GM12878 (cell line): ENCODE measurements at regions of chr6 and their contacts with region 1.

Region 1: DNA sequence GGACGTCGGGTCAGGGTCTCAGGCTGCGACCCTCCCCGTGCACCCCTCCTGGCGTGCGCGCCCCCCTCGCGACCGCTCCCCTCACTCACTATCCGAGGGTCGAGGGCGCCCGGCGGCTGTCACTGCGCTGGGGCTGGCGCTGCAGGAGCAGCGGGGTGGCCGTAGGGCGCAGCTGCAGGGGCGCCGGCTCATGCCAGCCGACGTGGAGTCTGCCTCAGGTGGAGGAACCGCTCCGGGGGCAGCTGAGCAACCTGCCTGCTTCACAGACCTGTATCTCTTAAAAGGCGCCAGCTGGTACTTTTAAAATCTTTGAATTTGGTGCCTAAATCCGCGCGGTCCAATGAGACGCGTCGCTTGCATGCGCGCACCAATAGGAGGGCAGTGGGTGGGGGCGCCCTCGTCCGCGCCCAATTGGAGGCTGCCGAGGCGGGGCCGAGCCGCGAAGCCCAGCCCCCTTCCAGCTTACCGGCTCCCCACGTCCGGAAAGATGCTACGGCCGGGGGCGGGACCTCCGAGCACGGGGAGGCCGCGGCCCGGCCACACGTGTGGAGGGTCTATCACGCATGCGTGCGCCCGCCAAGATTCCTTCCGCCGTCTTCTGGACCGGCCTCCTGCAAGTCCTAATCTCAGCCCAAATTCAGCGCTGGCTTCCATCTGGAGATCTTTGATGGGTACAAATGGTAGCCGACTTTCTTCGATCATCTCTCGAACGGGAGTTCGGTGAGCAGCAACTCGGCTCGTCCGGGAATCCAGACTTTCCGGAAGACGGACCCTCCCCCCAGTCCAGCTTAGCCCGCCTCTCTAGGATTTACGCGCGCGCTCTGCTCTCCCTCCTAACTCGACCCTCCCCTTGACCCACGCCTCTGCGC is at the start of gene FBXO5:
- DNase-seq: peak; percentile 85
- ATAC-seq: peak; percentile 87
- H3K4me3 ChIP-seq: peak within 1 kb of the TSS; percentile 92
- H3K27ac ChIP-seq: peak within 1 kb of the TSS; percentile 90
- H3K4me1 ChIP-seq: peaks cover 5% of the 10 kb centered on the region
- H3K27me3 ChIP-seq: no peaks in the 10 kb centered on the region
- CTCF ChIP-seq: no peak
- EP300 ChIP-seq: no peak
- POLR2A ChIP-seq: peak; percentile 79
- RAD21 ChIP-seq: no peak
- polyA plus RNA-seq, gene FBXO5: 13.6 to 19.3 TPM

Region 2: DNA sequence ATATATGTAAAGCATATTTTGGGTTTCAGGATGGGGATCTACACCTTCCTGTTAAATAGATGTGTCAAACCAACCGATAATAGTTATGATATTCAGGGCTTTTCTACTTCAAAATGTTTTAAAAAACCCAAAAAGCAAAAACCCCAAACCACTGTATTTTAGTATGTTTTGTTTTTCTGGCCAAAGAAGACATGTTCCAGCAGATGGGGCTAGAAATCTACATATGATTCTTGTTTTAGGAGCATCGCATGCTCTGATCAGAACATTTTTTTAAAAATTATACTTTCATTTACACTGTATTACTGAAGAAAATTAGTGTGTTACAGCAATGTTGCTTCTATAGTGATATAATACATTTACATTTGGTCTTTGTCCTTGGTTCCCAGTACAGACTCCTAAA is 1542.1 kb before region 1 on chr6:
- CTCF ChIA-PET with region 1: no interaction called
- POLR2A ChIA-PET with region 1: no interaction called
- RAD21 ChIA-PET with region 1: no interaction called
- SMC1A ChIA-PET with region 1: no interaction called
- in situ Hi-C with region 1: loop called (anchors 25 kb)
- intact Hi-C with region 1: no loop called
- DNase-seq: no peak
- ATAC-seq: peak; percentile 65
- H3K4me3 ChIP-seq: peak overlapping the region; percentile 32; the same call in 1 of the 2 replicates
- H3K27ac ChIP-seq: peak overlapping the region; percentile 61
- H3K4me1 ChIP-seq: peaks cover 13% of the 10 kb centered on the region
- H3K27me3 ChIP-seq: no peaks in the 10 kb centered on the region
- CTCF ChIP-seq: peak; percentile 24 to 50 (median 49); a peak in 5 of 6 replicates
- EP300 ChIP-seq: no peak
- POLR2A ChIP-seq: no peak
- RAD21 ChIP-seq: peak; percentile 67

Region 3: DNA sequence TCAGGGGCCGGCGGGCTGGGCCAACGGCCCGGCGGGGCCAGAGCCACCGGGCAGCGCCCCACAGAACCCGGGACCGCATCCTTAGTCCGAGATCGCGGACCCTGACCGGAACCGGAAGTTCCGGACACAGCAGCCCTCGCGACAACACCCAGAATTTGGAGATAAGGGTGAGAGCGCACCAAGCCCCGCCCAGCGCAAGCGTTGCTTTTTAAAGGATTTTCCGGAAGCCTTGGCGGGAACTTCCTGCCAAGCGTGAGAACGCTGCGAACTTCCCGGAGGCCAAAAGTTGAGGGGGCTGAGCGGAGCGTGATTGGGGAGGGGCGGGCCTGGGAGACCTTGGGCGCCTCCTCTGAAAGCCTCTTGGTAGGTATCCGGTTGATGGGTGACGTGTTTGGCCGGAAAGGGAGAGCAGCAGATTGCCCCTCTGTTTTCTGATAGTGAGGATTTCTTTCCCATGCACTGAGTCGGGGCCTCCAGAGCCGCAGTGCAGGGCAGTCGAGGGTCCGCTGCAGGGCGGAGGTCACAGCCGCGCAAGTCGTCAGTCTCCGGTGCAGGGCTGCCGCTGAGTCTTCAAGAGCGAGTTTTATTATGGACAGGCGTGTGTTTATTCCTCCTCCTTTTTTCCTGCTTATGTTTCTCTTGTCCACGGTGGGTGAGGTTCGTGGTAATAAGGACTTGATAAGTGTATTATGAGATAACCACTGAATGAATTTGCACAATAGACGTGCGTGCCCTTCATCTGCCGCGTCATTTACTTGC is 19.8 kb after region 1 on chr6 and contains the start of gene MTRF1L:
- CTCF ChIA-PET with region 1: interaction called, 9 read pairs
- POLR2A ChIA-PET with region 1: interaction called, 101 read pairs
- RAD21 ChIA-PET with region 1: interaction called, 22 read pairs
- SMC1A ChIA-PET with region 1: interaction called, 27 read pairs
- in situ Hi-C with region 1: no loop called
- intact Hi-C with region 1: loop called (anchors 2 kb)
- DNase-seq: peak; percentile 82
- ATAC-seq: peak; percentile 96
- H3K4me3 ChIP-seq: peak within 1 kb of the TSS; percentile 84
- H3K27ac ChIP-seq: peak within 1 kb of the TSS; percentile 61
- H3K4me1 ChIP-seq: no peaks in the 10 kb centered on the region
- H3K27me3 ChIP-seq: no peaks in the 10 kb centered on the region
- CTCF ChIP-seq: no peak
- EP300 ChIP-seq: no peak
- POLR2A ChIP-seq: peak; percentile 66; the same call in 1 of the 2 replicates
- RAD21 ChIP-seq: no peak
- polyA plus RNA-seq, gene MTRF1L: 5.1 to 9.0 TPM

Region 4: DNA sequence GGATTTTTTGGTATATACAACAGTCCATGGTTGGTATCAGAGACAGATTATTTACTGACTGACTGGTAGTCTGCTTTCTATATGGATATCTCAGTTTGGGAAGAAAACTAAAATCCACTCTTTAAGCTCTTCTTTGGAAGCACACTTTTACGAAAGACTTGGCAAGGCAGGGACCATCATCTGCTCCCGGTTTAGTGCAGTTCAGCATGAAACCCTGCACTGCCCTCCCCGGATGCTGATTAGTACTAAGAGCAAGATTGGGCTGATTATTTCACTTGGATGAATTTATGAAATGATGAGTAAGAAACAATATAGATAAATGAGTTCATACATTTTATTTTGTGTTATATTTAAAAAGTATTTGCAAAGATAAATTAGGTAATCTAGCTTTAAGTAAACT is 91.8 kb after region 1 on chr6:
- CTCF ChIA-PET with region 1: no interaction called
- POLR2A ChIA-PET with region 1: no interaction called
- RAD21 ChIA-PET with region 1: no interaction called
- SMC1A ChIA-PET with region 1: no interaction called
- in situ Hi-C with region 1: no loop called
- intact Hi-C with region 1: no loop called
- DNase-seq: no peak
- ATAC-seq: no peak
- H3K4me3 ChIP-seq: no peak overlapping the region
- H3K27ac ChIP-seq: no peak overlapping the region
- H3K4me1 ChIP-seq: no peaks in the 10 kb centered on the region
- H3K27me3 ChIP-seq: no peaks in the 10 kb centered on the region; a peak in 1 of 4 replicates
- CTCF ChIP-seq: no peak
- EP300 ChIP-seq: no peak
- POLR2A ChIP-seq: no peak
- RAD21 ChIP-seq: no peak

Region 5: DNA sequence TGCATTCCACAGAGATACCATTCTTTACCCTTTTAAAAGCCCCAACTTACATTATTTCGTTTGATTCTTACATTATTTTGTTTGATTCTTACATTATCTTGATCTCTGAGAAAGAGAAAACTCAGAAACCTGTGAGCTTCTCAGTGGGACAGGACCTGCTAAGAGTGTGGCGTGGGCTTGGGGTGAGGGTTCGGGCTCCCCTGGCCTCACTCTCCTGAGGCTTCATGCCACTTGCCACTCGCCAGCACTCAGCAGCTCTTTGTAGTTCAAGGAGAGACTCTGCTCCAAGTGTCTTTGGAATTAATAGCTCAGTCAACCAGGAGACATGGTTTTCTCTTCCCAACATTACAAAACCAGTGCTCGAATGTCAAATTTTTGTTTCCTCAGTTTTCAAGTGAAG is 280.5 kb after region 1 on chr6:
- CTCF ChIA-PET with region 1: no interaction called
- POLR2A ChIA-PET with region 1: no interaction called
- RAD21 ChIA-PET with region 1: no interaction called
- SMC1A ChIA-PET with region 1: no interaction called
- in situ Hi-C with region 1: no loop called
- intact Hi-C with region 1: no loop called
- DNase-seq: no peak
- ATAC-seq: no peak
- H3K4me3 ChIP-seq: no peak overlapping the region
- H3K27ac ChIP-seq: no peak overlapping the region
- H3K4me1 ChIP-seq: no peaks in the 10 kb centered on the region
- H3K27me3 ChIP-seq: no peaks in the 10 kb centered on the region; a peak in 1 of 4 replicates
- CTCF ChIP-seq: no peak
- EP300 ChIP-seq: no peak
- POLR2A ChIP-seq: no peak
- RAD21 ChIP-seq: no peak

Region 6: GRCh38 chr6:153449279-153449678 is 466.3 kb after region 1 on chr6:
- CTCF ChIA-PET with region 1: no interaction called
- POLR2A ChIA-PET with region 1: no interaction called
- RAD21 ChIA-PET with region 1: no interaction called
- SMC1A ChIA-PET with region 1: no interaction called
- in situ Hi-C with region 1: no loop called
- intact Hi-C with region 1: no loop called
- DNase-seq: no peak
- ATAC-seq: no peak
- H3K4me3 ChIP-seq: no peak overlapping the region
- H3K27ac ChIP-seq: no peak overlapping the region
- H3K4me1 ChIP-seq: no peaks in the 10 kb centered on the region
- H3K27me3 ChIP-seq: no peaks in the 10 kb centered on the region
- CTCF ChIP-seq: no peak
- EP300 ChIP-seq: no peak
- POLR2A ChIP-seq: no peak
- RAD21 ChIP-seq: no peak

Region 7: GRCh38 chr6:153511896-153512496 is 529.0 kb after region 1 on chr6:
- CTCF ChIA-PET with region 1: no interaction called
- POLR2A ChIA-PET with region 1: no interaction called
- RAD21 ChIA-PET with region 1: no interaction called
- SMC1A ChIA-PET with region 1: no interaction called
- in situ Hi-C with region 1: no loop called
- intact Hi-C with region 1: no loop called
- DNase-seq: no peak
- ATAC-seq: peak; percentile 87
- H3K4me3 ChIP-seq: no peak overlapping the region
- H3K27ac ChIP-seq: no peak overlapping the region
- H3K4me1 ChIP-seq: no peaks in the 10 kb centered on the region
- H3K27me3 ChIP-seq: no peaks in the 10 kb centered on the region
- CTCF ChIP-seq: peak; percentile 50 to 72 (median 62)
- EP300 ChIP-seq: no peak
- POLR2A ChIP-seq: no peak
- RAD21 ChIP-seq: peak; percentile 53

Region 8: DNA sequence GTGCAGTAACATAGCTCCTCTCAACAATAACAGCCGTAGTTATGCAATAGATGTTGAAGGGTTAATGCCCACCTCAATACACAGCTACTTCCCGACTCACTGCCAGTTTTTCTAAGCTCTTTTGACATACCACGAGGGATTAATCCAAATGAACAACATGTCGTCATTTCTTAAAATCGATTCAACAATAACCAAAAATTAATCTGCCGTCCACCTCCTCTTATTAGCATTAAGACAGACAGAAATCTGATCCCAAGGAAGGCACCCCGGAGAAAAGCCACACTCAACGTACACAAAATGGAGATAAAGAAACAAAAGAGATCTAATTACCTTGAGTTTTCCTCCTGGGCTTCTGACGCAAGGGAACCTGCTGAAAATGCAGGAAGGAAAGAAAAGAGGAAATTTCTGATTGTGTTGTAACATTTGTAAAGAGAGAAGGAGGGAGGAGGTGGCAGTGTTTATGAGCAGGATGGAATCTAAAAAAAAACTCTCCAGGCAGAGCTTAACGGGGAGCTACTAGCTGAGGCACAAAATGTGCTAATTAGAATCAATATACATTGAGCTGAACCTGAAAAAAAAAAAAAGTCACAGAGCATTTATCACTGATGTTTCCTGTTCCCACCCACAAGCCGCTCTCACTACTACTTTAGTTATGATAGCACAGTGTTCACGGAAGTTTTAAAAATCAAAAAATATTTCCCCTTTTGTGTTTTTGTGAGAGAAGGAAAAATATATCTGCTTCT is 1264.3 kb after region 1 on chr6:
- CTCF ChIA-PET with region 1: no interaction called
- POLR2A ChIA-PET with region 1: no interaction called
- RAD21 ChIA-PET with region 1: no interaction called
- SMC1A ChIA-PET with region 1: no interaction called
- in situ Hi-C with region 1: loop called (anchors 25 kb)
- intact Hi-C with region 1: loop called (anchors 5 kb)
- DNase-seq: no peak
- ATAC-seq: peak; percentile 59
- H3K4me3 ChIP-seq: peak overlapping the region; percentile 76
- H3K27ac ChIP-seq: peak overlapping the region; percentile 86
- H3K4me1 ChIP-seq: peaks cover 26% of the 10 kb centered on the region
- H3K27me3 ChIP-seq: no peaks in the 10 kb centered on the region
- CTCF ChIP-seq: no peak
- EP300 ChIP-seq: peak; percentile 60 to 73
- POLR2A ChIP-seq: no peak
- RAD21 ChIP-seq: no peak